ENCODE measurements at regions of chr19 and their contacts with region 1.

Region 1: DNA sequence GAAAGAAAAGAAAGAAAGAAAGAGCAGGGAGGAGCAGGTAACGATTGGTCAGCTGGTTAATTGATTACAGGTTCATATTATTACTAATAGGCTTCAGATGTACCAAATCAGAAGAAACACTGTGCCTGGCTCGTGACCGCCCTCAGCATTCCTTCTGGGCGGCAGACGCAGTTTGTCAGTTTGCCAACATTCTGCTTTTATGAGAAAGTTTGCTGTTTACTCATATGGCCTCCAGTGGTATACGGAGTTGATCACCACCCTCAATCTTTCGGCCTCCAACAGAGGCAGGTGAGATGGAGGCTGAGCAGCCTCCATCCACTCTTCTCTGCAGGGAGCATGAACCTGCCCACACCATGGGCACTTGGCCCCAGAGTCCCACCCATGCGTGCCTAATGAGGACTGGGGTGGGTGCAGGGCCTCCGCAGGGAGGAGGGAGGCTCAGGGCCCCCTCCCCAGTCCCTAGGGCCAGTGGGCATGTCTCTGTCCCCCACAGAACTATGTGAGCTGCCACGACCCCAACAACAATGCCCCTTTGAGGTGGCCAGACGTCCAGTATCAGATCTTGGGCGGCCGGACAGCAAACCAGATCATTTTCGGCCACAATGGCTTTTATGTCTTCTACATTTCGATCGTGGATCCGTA is 8.8 kb downstream of the PRR22 start:
- DNase-seq: no peak

Region 2: GRCh38 chr19:5645409-5645808 is 130.4 kb before region 1 on chr19:
- CTCF ChIA-PET with region 1: no interaction called
- POLR2A ChIA-PET with region 1: no interaction called
- DNase-seq: no peak

Region 3: GRCh38 chr19:5719274-5719960 is 56.4 kb before region 1 on chr19:
- CTCF ChIA-PET with region 1: no interaction called
- POLR2A ChIA-PET with region 1: no interaction called
- DNase-seq: no peak

Region 4: DNA sequence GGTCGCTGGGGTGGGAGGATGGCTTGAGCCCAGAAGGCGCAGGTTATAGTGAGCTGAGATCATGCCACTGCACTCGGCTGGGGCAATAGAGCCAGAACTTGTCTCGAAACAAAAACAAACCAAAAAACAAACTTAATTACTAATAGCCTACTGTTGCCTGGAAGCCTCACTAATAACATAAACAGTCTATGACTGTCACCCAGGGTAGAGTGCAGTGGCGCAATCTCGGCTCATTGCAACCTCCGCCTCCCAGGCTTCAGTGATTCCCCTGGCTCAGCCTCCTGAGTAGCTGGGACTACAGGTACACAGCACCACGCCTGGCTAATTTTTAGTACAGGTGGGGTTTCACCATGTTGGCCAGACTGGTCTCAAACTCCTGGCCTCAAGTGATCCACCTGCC is 37.4 kb before region 1 on chr19:
- CTCF ChIA-PET with region 1: no interaction called
- POLR2A ChIA-PET with region 1: no interaction called
- DNase-seq: no peak

Region 5: GRCh38 chr19:5790573-5791520 is 15.1 kb after region 1 on chr19 and contains the start of gene DUS3L:
- CTCF ChIA-PET with region 1: interaction called, 4 read pairs
- POLR2A ChIA-PET with region 1: interaction called, 13 read pairs
- DNase-seq: peak; percentile 96

Measured in HEK293T (cell line).